H1 (cell line): ENCODE measurements at regions of chr10 and their contacts with region 1.

Region 1: GRCh38 chr10:63521416-63522276 is 445 bp downstream of the REEP3 start:
- DNase-seq: peak in 1 of 2 experiments; percentile 85
- H3K4me3 ChIP-seq: peak overlapping the region; percentile 73 to 86 (median 82)
- H3K27ac ChIP-seq: peak overlapping the region; percentile 94
- H3K4me1 ChIP-seq: peaks cover 2 to 12% (median 10%) of the 10 kb centered on the region in 4 experiments; a peak in 4 of 7 replicates
- H3K27me3 ChIP-seq: no peaks in the 10 kb centered on the region
- CTCF ChIP-seq: no peak
- EP300 ChIP-seq: no peak
- POLR2A ChIP-seq: peak; percentile 68 to 93
- RAD21 ChIP-seq: peak in 1 of 2 experiments; percentile 0; a peak in 1 of 4 replicates

Region 2: DNA sequence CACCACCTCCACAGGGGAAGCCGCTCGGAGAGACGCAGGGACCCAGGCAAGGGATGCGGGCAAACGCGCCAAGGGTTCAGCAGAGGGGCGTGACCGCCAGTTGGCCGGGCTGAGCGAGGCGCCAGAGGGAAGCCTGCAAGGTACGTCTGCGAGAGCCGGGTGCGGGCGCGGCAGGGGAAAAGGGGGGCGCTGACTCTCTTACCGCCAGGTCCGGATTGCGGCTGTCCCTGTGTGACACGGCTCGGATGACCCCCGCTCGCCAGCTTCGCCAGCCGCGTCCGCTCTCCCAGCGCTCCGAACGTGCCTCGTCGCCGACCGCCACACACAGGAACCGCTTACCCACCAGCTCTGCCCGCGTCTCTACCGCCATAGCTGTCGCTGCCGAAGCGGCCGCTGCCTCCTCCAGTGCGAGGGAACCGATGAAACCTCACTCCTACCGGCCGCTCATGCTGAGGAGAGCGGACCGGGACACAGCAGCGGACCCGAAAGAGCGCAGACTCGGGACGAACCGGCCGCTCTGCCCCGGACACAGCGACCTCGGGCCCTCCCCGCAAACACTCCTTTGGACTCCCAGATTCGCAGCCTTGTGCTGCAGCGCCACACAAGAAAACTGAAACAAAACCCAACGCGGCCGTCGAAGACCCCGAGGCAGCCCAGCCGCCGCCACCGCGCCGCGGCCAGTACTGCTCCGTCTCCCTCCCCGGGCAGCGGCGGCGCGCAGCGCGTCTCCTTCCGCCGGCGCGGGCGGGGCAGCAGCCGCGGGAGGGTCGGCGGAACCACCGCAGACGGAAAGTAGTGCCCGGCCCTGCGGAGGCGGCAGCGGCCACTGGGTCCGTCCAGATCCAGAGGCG is 56.1 kb before region 1 on chr10 and contains the start of gene JMJD1C:
- CTCF ChIA-PET with region 1: interaction called, 6 read pairs
- POLR2A ChIA-PET with region 1: interaction called, 13 read pairs
- DNase-seq: peak; percentile 63 to 91
- H3K4me3 ChIP-seq: peak within 1 kb of the TSS; percentile 67 to 88 (median 85)
- H3K27ac ChIP-seq: peak within 1 kb of the TSS; percentile 76; the same call in 1 of the 2 replicates
- H3K4me1 ChIP-seq: peaks cover 0 to 4% (median 0%) of the 10 kb centered on the region in 4 experiments; a peak in 2 of 7 replicates
- H3K27me3 ChIP-seq: no peaks in the 10 kb centered on the region
- CTCF ChIP-seq: peak in 1 of 3 experiments; percentile 6; a peak in 1 of 4 replicates
- EP300 ChIP-seq: peak in 1 of 2 experiments; percentile 77; a peak in 1 of 3 replicates
- POLR2A ChIP-seq: peak; percentile 67 to 83
- RAD21 ChIP-seq: peak; percentile 0 to 46; a peak in 2 of 4 replicates
- total RNA-seq, gene JMJD1C: 208 and 210 TPM in 2 replicates

Region 3: GRCh38 chr10:63504125-63504880 is 17.3 kb before region 1 on chr10:
- CTCF ChIA-PET with region 1: interaction called, 10 read pairs
- POLR2A ChIA-PET with region 1: interaction called, 49 read pairs
- DNase-seq: no peak
- H3K4me3 ChIP-seq: peak overlapping the region in 1 of 4 experiments; percentile 15; a peak in 1 of 8 replicates
- H3K27ac ChIP-seq: peak overlapping the region; percentile 29; the same call in 1 of the 2 replicates
- H3K4me1 ChIP-seq: peaks cover 0 to 18% (median 12%) of the 10 kb centered on the region in 4 experiments; a peak in 6 of 7 replicates
- H3K27me3 ChIP-seq: no peaks in the 10 kb centered on the region
- CTCF ChIP-seq: no peak
- EP300 ChIP-seq: no peak
- POLR2A ChIP-seq: no peak
- RAD21 ChIP-seq: no peak

Region 4: DNA sequence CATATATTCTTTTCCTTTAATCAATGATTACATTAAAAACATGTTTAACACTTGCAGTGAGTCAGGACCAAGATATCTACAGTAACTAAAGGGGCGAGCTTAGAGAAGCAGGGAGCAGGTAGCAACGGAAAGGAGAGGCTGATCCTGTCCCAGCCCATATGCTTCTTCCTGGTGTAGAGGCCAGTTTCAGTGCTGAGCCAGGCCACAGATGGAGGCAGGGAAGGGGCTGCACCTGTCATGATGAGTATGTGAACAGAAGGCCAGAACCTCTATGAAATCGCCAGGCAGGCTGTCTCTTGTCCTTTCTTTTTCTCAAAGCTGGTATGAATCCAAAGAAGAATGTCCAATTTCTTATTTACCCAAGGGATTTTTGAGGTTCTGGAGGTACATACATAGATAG is 15.9 kb after region 1 on chr10:
- CTCF ChIA-PET with region 1: no interaction called
- POLR2A ChIA-PET with region 1: interaction called, 12 read pairs
- DNase-seq: no peak
- H3K4me3 ChIP-seq: no peak overlapping the region
- H3K27ac ChIP-seq: no peak overlapping the region
- H3K4me1 ChIP-seq: no peaks in the 10 kb centered on the region
- H3K27me3 ChIP-seq: peaks cover 0 to 1% (median 0%) of the 10 kb centered on the region in 4 experiments; a peak in 1 of 7 replicates
- CTCF ChIP-seq: no peak
- EP300 ChIP-seq: no peak
- POLR2A ChIP-seq: no peak
- RAD21 ChIP-seq: no peak

Region 5: DNA sequence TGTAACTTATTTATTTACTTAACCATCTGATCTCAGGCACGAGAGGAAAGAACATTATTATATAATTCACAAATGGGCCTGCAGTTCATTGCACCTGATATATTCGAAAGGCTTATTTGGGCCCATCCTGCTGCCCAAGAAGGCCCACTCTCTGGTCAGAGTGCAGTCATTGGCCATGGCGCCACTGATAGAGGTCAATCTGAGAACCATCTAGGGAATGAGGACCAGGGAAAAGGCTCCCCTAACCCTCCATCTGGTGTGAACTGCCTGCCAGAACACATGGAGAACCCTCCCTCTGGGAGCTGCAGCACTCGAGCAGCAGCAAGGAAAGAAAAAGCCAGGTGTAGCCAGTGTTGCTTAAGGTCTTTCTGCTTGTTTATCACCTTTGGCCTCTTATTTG is 136.1 kb after region 1 on chr10:
- CTCF ChIA-PET with region 1: no interaction called
- POLR2A ChIA-PET with region 1: no interaction called
- DNase-seq: no peak
- H3K4me3 ChIP-seq: no peak overlapping the region
- H3K27ac ChIP-seq: no peak overlapping the region
- H3K4me1 ChIP-seq: no peaks in the 10 kb centered on the region
- H3K27me3 ChIP-seq: no peaks in the 10 kb centered on the region
- CTCF ChIP-seq: no peak
- EP300 ChIP-seq: no peak
- POLR2A ChIP-seq: no peak
- RAD21 ChIP-seq: no peak